Naive thymus-derived CD4-positive, alpha-beta T cell (primary cell): ENCODE measurements at regions of chr7 and their contacts with region 1.

Region 1: DNA sequence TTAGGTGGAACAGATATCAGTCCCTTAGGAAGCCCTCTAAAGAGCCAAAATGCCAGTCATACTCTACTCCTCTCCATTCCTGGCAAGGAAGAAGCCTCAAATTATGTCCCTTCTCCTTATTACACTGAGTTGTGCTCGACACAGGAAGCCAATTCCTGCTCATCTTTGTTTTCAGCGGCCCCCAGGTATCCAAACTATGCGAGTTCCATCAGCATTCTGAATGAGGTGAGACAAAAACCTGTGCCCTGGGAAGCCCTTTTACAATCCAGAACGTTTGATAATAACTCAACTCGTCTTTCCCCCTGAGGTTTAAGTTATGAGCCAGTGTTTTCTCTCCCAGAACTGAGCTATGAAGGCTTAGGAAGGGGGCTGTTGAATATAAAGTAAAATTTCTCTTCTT is 580.5 kb downstream of the NXPH1 start:
- DNase-seq: no peak
- ATAC-seq: no peak
- H3K4me3 ChIP-seq: no peak overlapping the region
- H3K4me3 Mint-ChIP-seq: no peak overlapping the region
- H3K27ac ChIP-seq: no peak overlapping the region
- H3K27ac Mint-ChIP-seq: no peak overlapping the region
- H3K4me1 ChIP-seq: no peaks in the 10 kb centered on the region
- H3K4me1 Mint-ChIP-seq: no peaks in the 10 kb centered on the region
- H3K27me3 ChIP-seq: no peaks in the 10 kb centered on the region
- H3K27me3 Mint-ChIP-seq: no peaks in the 10 kb centered on the region

Region 2: DNA sequence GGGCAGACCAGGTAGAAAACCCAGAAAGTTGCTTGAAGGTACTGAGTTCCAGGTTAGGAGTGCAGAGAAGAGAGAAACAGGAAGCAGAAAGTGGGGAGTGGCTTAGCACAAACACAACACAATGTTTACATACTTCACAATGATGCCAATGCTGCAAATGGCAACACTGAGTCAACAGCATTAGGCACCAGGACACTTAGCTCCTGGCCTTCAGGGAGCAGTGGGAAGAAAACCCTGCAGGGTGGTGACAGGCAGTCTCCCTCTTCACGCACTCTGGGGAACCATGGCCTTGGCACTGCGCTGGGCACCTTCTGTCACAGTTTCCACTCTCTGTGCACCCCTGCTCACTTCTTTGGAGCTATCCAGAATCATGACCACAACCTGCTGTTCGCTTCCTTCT is 759.3 kb before region 1 on chr7:
- CTCF ChIA-PET with region 1: no interaction called
- POLR2A ChIA-PET with region 1: no interaction called
- intact Hi-C with region 1: no loop called
- DNase-seq: no peak
- ATAC-seq: no peak
- H3K4me3 ChIP-seq: no peak overlapping the region
- H3K4me3 Mint-ChIP-seq: no peak overlapping the region
- H3K27ac ChIP-seq: no peak overlapping the region
- H3K27ac Mint-ChIP-seq: no peak overlapping the region
- H3K4me1 ChIP-seq: no peaks in the 10 kb centered on the region
- H3K4me1 Mint-ChIP-seq: no peaks in the 10 kb centered on the region
- H3K27me3 ChIP-seq: no peaks in the 10 kb centered on the region
- H3K27me3 Mint-ChIP-seq: peaks cover 7 to 26% (median 16%) of the 10 kb centered on the region in 5 donors

Region 3: DNA sequence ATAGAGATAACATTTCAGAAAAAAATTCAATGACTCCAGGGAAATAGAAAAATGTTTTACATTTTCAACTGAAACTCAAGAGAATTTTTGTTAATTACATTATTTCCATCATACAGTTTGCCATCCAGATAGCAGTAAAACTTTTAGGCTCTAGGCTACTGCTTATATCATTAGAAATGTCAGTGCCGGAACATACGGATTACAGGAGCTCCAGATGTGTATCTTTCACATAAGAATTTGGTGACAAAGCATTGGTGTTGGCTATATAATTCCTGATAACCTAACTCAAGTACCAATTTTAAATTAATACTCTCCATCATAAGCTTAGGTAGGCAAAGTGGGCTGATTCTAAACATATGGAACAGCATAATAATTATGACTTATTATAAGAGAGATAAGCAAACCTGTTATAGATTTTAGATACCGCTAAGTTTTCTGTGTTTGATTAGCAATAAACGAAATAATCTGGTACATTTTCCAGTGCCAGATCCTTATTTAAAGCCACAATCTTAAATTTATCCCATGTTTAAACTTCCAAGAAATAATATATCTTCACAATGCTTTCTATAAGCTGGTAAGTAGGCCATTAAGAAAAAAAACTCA is 57.3 kb after region 1 on chr7:
- CTCF ChIA-PET with region 1: no interaction called
- POLR2A ChIA-PET with region 1: no interaction called
- intact Hi-C with region 1: loop called in 1 of 2 experiments (anchors 10 kb)
- DNase-seq: no peak
- ATAC-seq: no peak
- H3K4me3 ChIP-seq: no peak overlapping the region
- H3K4me3 Mint-ChIP-seq: no peak overlapping the region
- H3K27ac ChIP-seq: no peak overlapping the region
- H3K27ac Mint-ChIP-seq: no peak overlapping the region
- H3K4me1 ChIP-seq: no peaks in the 10 kb centered on the region
- H3K4me1 Mint-ChIP-seq: no peaks in the 10 kb centered on the region
- H3K27me3 ChIP-seq: no peaks in the 10 kb centered on the region
- H3K27me3 Mint-ChIP-seq: no peaks in the 10 kb centered on the region